Mammary epithelial cell (primary cell): ENCODE measurements at regions of chr9 and their contacts with region 1.

Region 1: GRCh38 chr9:127611899-127612790 is at the start of gene STXBP1:
- DNase-seq: peak; percentile 79
- H3K4me3 ChIP-seq: peak within 1 kb of the TSS; percentile 81 to 92 (median 88)
- H3K27ac ChIP-seq: peak within 1 kb of the TSS; percentile 67
- H3K4me1 ChIP-seq: peaks cover 29% of the 10 kb centered on the region
- H3K27me3 ChIP-seq: no peaks in the 10 kb centered on the region
- CTCF ChIP-seq: no peak
- total RNA-seq, gene STXBP1: 32.5 to 72.5 TPM

Region 2: DNA sequence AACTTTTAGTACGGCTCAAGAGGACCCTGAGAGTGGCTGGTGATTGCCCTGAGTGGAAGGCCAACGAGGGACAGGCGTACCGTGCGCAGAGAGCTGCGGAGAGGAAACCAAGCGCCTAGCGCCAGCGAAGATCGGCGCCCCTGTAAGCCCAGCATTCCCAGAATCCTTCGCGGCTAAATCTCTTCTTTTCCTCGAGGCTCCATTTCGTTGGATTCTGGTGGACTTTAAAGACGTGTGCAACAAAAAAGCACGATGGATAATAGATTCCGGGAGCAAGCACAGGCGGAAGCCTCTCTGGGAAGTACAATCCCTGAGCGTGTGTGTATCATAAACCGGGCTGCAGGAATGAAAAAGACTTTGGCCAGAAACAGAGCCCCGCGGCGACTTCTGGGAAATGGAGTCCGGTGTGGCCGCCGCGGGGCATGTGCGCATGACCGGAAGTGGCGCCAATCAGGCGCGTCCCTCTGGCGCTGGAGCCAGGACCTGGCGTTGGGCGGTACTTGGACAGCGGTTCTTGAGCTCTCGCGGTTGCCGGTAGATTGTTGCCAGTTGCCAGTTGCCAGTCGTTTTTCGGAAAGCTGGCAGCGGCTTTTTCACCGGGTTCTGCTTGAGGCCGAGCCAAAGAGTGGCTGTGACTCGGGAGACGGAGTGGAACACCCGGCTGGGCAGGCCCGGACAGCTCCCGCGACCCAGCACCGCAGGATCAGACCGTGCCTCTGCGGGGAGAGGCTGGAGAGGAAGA is 188.0 kb before region 1 on chr9 and contains the start of gene ZNF79:
- CTCF ChIA-PET with region 1: no interaction called
- dilution Hi-C with region 1: no loop called
- in situ Hi-C with region 1: no loop called
- intact Hi-C with region 1: no loop called
- DNase-seq: peak; percentile 90
- H3K4me3 ChIP-seq: peak within 1 kb of the TSS; percentile 67 to 88 (median 84)
- H3K27ac ChIP-seq: peak within 1 kb of the TSS; percentile 63
- H3K4me1 ChIP-seq: peaks cover 21% of the 10 kb centered on the region
- H3K27me3 ChIP-seq: no peaks in the 10 kb centered on the region
- CTCF ChIP-seq: no peak
- total RNA-seq, gene ZNF79: 10.5 to 16.8 TPM

Region 3: DNA sequence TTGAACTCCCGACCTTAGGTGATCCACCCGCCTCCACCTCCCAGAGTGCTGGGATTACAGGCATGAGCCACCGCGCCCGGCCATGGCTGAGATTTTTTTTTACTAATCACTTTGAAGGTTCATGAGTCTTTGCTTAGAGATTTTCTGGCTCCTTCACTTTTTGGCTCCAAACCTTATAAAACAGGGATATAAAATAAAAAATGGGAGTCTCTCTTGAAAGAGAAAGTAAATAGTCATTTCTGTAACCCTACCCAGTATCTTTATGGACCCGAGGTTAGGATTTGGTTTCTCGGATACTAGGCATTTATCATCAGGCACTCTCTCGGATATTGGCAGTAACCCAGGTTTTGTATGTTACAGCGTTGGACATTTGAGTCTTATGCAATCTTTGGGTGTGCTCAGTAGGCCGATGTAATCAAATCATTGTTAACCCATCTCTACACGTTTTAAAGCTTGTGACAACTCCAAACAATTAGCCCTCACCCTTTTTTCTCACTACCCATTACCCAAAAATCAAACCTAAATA is 25.2 kb after region 1 on chr9:
- CTCF ChIA-PET with region 1: no interaction called
- dilution Hi-C with region 1: no loop called
- in situ Hi-C with region 1: no loop called
- intact Hi-C with region 1: loop called (anchors 2 kb)
- DNase-seq: peak; percentile 90
- H3K4me3 ChIP-seq: peak overlapping the region in 1 of 3 experiments; percentile 10
- H3K27ac ChIP-seq: peak overlapping the region; percentile 57
- H3K4me1 ChIP-seq: peaks cover 24% of the 10 kb centered on the region
- H3K27me3 ChIP-seq: no peaks in the 10 kb centered on the region
- CTCF ChIP-seq: no peak

Region 4: GRCh38 chr9:127651697-127652610 is 39.8 kb after region 1 on chr9:
- CTCF ChIA-PET with region 1: no interaction called
- dilution Hi-C with region 1: no loop called
- in situ Hi-C with region 1: no loop called
- intact Hi-C with region 1: loop called (anchors 5 kb)
- DNase-seq: no peak
- H3K4me3 ChIP-seq: no peak overlapping the region
- H3K27ac ChIP-seq: no peak overlapping the region
- H3K4me1 ChIP-seq: peaks cover 3% of the 10 kb centered on the region
- H3K27me3 ChIP-seq: no peaks in the 10 kb centered on the region
- CTCF ChIP-seq: no peak

Region 5: DNA sequence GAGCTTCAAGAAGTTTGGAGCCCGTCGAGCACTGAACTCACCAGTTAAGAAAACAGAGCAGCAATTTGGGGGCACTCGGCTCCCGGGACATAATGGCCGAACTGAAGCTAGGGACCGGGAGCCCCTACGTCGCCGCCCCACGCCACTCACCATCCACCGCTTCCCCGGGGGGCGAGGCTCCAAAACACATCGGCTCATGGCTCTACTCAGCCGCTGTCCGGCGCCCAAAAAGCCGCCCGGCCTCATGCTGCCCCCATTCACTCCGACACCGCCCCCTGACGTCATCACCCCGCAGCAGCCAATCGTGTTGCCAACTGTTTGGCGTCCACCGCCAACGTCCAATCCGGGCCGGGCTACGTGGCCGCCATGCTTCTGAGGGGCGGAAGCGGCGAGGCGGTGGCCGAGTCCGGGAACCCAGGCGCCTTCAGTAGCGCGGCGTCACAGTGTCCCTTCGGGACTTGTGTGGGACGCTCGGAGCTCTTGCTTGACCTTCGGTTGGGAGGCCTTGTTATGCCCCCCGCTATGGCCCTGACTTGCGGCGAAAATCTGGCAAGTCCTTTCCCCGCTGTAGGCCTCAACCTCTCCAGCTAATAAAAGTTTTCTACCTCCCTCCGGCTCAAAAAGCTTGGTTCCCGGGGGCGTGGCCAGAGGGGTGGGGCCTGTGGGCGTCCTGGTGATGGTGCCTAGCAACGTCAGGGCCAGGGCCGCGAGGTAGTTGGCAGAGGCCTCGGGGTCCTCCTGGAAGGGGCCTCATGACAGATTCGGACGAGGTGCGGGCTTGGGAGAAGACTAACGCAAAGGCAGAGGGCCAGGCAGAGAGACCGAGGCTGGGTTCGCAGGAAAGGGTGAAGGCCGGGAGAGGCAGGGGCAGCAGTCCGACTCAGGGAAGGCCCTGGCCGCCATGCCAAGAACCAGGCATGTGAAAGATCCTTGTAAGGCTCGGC is 103.5 kb after region 1 on chr9 and contains the starts of genes PTRH1 and TTC16:
- CTCF ChIA-PET with region 1: no interaction called
- dilution Hi-C with region 1: no loop called
- in situ Hi-C with region 1: loop called in 1 of 2 experiments (anchors 10 kb)
- intact Hi-C with region 1: loop called (anchors 2 kb)
- DNase-seq: peak; percentile 95
- H3K4me3 ChIP-seq: peak within 1 kb of the TSS; percentile 67 to 92 (median 88)
- H3K27ac ChIP-seq: peak within 1 kb of the TSS; percentile 85
- H3K4me1 ChIP-seq: peaks cover 14% of the 10 kb centered on the region
- H3K27me3 ChIP-seq: no peaks in the 10 kb centered on the region
- CTCF ChIP-seq: no peak
- total RNA-seq, gene PTRH1: 18.2 to 32.2 TPM
- total RNA-seq, gene TTC16: under 0.01 to 0.21 TPM

Region 6: GRCh38 chr9:127721391-127721853 is 109.3 kb after region 1 on chr9:
- CTCF ChIA-PET with region 1: interaction called, 6 read pairs
- dilution Hi-C with region 1: no loop called
- in situ Hi-C with region 1: loop called in 1 of 2 experiments (anchors 10 kb)
- intact Hi-C with region 1: loop called (anchors 1 kb)
- DNase-seq: peak; percentile 49
- H3K4me3 ChIP-seq: no peak overlapping the region
- H3K27ac ChIP-seq: no peak overlapping the region
- H3K4me1 ChIP-seq: peaks cover 27% of the 10 kb centered on the region
- H3K27me3 ChIP-seq: no peaks in the 10 kb centered on the region
- CTCF ChIP-seq: peak in 1 of 2 donors; percentile 24

Region 7: DNA sequence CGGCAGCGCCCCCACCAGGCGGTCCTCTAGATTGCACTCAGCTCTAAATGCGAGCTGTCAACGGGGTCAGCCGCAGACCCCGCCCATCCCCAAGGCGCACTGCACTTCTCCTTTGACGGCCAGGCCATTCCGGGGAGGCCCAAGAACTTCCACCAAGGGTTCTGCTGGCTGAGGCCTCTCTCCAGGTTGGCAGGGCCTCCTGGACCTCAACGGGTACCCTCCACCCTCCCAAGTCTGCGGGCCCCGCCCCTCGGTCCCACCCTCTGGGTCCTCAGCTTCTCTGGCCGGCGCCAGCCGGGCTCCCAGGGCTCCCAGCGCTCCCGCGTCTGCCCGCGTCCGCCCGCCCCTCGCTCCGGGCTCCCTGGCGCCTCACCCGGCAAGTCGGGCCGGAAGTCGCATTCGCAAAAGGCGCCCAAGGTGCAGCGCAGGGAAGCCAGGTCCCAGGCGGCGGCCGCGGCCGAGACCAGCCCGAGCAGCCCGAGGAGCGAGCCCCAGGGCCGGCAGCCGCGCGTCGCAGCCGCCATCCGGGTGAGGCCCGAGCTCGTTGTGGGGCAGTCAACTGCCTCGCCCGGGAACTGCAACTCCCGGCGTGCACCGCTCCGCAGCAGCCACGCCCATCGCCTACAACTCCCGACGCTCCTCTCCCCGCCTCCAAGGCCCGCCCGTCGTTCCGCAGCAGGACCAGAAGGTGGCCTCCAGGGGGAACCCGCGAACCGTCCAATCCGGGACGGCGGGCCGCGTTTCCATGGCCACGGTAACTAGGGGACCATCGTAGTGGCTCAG is 122.8 kb after region 1 on chr9 and contains the start of gene TOR2A:
- CTCF ChIA-PET with region 1: interaction called, 4 read pairs
- dilution Hi-C with region 1: no loop called
- in situ Hi-C with region 1: no loop called
- intact Hi-C with region 1: loop called (anchors 1 kb)
- DNase-seq: peak; percentile 95
- H3K4me3 ChIP-seq: peak within 1 kb of the TSS; percentile 59 to 62 (median 61)
- H3K27ac ChIP-seq: peak within 1 kb of the TSS; percentile 51
- H3K4me1 ChIP-seq: peaks cover 20% of the 10 kb centered on the region
- H3K27me3 ChIP-seq: no peaks in the 10 kb centered on the region
- CTCF ChIP-seq: peak; percentile 84 to 94
- total RNA-seq, gene TOR2A: 4.0 to 13.2 TPM

Region 8: GRCh38 chr9:127916665-127917613 is 304.8 kb after region 1 on chr9 and contains the start of gene ST6GALNAC4:
- CTCF ChIA-PET with region 1: no interaction called
- dilution Hi-C with region 1: no loop called
- in situ Hi-C with region 1: loop called in 1 of 2 experiments (anchors 10 kb)
- intact Hi-C with region 1: loop called (anchors 1 kb)
- DNase-seq: peak; percentile 76
- H3K4me3 ChIP-seq: peak within 1 kb of the TSS; percentile 35 to 62 (median 58)
- H3K27ac ChIP-seq: peak within 1 kb of the TSS; percentile 16
- H3K4me1 ChIP-seq: peaks cover 38% of the 10 kb centered on the region
- H3K27me3 ChIP-seq: no peaks in the 10 kb centered on the region
- CTCF ChIP-seq: no peak
- total RNA-seq, gene ST6GALNAC4: 14.3 to 19.6 TPM